WTC11 (cell line): ENCODE measurements at regions of chr1 and their contacts with region 1.

Region 1: DNA sequence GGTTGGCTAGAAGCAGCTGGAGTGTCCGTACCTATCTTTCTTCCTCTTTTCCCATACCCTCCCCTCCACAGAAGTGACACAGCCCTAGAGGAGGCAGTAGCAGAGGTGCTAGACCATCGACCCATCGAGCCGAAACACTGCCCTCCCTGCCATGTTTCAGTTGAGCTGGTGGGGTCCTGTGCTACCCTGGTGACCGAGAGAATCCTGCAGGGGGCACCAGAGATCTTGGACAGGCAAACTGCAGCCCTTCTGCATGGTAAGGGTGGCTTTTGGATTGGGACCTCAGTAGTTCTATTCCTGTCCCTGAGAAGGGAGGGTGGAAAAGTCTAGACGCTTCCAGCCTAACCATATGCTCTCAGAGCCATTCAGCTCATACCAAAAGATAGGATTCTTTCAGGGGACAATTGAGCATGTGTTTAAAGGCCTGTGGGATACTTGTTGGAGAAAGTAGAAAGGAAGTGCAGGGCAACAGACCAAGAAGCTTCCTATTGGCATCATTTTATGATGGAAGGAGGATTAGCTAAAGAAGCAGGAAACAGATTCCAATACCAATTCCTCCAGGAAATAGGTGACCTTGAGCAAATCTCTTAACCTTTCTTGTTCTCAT is 11.7 kb upstream of the BNIPL start:
- DNase-seq: peak; percentile 92
- ATAC-seq: peak; percentile 100
- H3K4me3 Mint-ChIP-seq: no peak overlapping the region
- H3K27ac Mint-ChIP-seq: peak overlapping the region; percentile 33; the same call in 1 of the 2 replicates
- H3K4me1 Mint-ChIP-seq: no peaks in the 10 kb centered on the region
- H3K27me3 Mint-ChIP-seq: no peaks in the 10 kb centered on the region
- CTCF ChIP-seq: peak; percentile 67

Region 2: DNA sequence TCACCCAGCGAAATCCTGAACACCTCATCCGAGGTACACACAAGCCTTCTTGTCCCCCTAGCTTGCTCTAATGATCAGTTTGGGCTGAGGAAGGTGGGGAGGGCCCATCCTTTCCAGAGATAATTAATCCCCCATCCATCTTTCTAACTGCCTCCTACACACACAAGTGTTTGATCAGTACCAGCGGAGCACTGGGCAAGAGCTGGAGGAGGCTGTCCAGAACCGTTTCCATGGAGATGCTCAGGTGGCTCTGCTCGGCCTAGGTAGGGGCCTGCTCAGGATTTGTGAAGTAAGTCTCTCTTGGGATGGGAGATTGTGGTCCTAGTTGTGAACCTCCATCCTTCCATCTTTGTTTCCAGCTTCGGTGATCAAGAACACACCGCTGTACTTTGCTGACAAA is 36.7 kb before region 1 on chr1:
- CTCF ChIA-PET with region 1: no interaction called
- POLR2A ChIA-PET with region 1: no interaction called
- DNase-seq: no peak
- ATAC-seq: no peak
- H3K4me3 Mint-ChIP-seq: no peak overlapping the region
- H3K27ac Mint-ChIP-seq: no peak overlapping the region
- H3K4me1 Mint-ChIP-seq: no peaks in the 10 kb centered on the region
- H3K27me3 Mint-ChIP-seq: no peaks in the 10 kb centered on the region
- CTCF ChIP-seq: no peak

Region 3: GRCh38 chr1:151036363-151036762 is 11.7 kb after region 1 on chr1 and contains the start of gene BNIPL:
- CTCF ChIA-PET with region 1: interaction called, 10 read pairs
- POLR2A ChIA-PET with region 1: interaction called, 4 read pairs
- DNase-seq: no peak
- ATAC-seq: peak; percentile 69
- H3K4me3 Mint-ChIP-seq: peak within 1 kb of the TSS; percentile 51
- H3K27ac Mint-ChIP-seq: peak within 1 kb of the TSS; percentile 93
- H3K4me1 Mint-ChIP-seq: peaks cover 16% of the 10 kb centered on the region
- H3K27me3 Mint-ChIP-seq: no peaks in the 10 kb centered on the region
- CTCF ChIP-seq: no peak
- total RNA-seq, gene BNIPL: 2.5 to 4.0 TPM (median 3.8 TPM) in 3 replicates

Region 4: GRCh38 chr1:151059078-151059907 is 34.6 kb after region 1 on chr1 and contains the start of gene CDC42SE1:
- CTCF ChIA-PET with region 1: interaction called, 20 read pairs
- POLR2A ChIA-PET with region 1: no interaction called
- DNase-seq: peak; percentile 86
- ATAC-seq: peak; percentile 84
- H3K4me3 Mint-ChIP-seq: peak within 1 kb of the TSS; percentile 79
- H3K27ac Mint-ChIP-seq: peak within 1 kb of the TSS; percentile 86
- H3K4me1 Mint-ChIP-seq: peaks cover 45% of the 10 kb centered on the region
- H3K27me3 Mint-ChIP-seq: no peaks in the 10 kb centered on the region
- CTCF ChIP-seq: 0 out of 2 replicates have a peak, but pooled peaks have one; percentile 35
- total RNA-seq, gene CDC42SE1: 72.8 to 76.3 TPM (median 75.5 TPM) in 3 replicates